HepG2 (cell line): ENCODE measurements at regions of chr14 and their contacts with region 1.

Region 1: DNA sequence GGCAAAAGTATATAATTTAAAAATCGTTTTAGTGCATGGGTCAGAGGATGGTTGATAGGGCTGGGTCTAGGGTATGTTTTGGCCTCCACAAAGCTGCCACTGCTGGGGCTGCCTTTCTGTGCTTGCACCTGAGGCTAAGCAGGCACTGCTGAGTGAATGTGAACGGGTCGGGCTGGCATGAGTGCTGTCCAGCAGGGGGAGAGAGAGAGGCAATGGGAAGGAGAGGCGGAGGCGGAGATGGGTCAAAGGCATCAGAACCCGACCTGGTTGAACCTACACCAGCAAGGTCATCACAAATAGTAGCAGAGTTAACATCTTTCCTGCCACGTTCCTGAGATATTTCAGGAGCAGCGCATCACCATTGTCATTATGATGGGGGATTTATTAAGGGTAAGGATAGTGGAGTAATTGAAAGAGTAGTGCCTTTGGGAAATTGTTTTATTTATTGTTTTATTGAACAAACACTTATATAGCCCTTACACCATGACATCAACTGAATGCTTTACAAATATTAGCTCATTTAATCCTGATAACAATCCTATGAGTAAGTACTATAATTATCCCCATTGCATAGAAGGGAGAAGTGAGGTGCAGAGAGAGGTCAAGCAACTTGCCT is 5.8 kb upstream of the NRXN3 start:
- DNase-seq: peak; percentile 15
- ATAC-seq: peak; percentile 98
- H3K4me3 ChIP-seq: no peak overlapping the region
- H3K27ac ChIP-seq: no peak overlapping the region
- H3K4me1 ChIP-seq: no peaks in the 10 kb centered on the region
- H3K27me3 ChIP-seq: 0 out of 5 replicates have a peak, but pooled peaks cover 0 to 3% of the 10 kb centered on the region in 2 experiments
- CTCF ChIP-seq: peak; percentile 77
- EP300 ChIP-seq: no peak
- POLR2A ChIP-seq: no peak
- RAD21 ChIP-seq: no peak

Region 2: DNA sequence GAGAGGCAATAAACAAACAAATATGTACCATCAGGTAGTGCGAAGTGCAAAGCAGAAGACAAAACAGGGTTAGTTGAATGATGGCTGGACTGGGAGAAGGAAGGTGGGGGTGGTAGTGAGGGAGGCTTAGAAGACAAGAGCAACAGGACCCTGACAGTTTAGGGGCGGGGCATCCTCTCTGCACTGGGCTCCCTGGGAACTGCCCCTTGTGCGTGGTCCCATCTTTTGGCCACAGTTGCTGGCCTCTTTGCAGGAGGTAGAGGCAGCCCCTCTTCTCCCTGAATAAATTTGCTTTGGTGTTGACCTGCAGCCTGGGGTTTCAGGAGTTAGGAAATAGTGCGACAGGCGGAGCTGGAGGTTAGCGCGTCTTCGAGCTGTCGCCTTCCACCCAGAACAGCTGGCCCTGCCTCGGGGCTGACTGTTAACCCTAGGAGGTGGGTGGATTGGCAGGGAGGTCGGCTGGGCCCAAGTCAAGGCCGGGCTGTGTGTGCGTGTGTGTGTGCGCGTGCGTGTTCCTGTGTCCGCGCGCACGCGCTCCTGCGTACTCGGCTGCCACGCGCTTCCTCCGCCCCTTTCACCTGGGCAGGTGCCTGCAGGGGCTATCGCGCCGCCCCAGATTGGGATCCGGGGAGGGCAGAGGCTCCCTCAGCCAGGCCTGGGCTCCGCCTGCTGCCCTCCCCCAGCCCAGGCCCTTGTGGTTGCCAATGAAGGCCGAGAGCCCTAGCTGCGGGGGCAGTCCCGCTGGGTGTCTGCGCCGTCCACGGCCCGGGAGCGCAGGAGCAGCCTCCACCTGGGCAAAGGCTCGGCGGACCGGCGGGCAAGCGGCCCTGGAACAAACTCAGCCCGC is 183.6 kb before region 1 on chr14:
- CTCF ChIA-PET with region 1: no interaction called
- POLR2A ChIA-PET with region 1: no interaction called
- in situ Hi-C with region 1: no loop called
- intact Hi-C with region 1: no loop called
- DNase-seq: no peak
- ATAC-seq: peak; percentile 74
- H3K4me3 ChIP-seq: peak overlapping the region in 2 of 3 experiments; percentile 39 to 52; a peak in 3 of 6 replicates
- H3K27ac ChIP-seq: no peak overlapping the region
- H3K4me1 ChIP-seq: 0 out of 2 replicates have a peak, but pooled peaks cover 8% of the 10 kb centered on the region
- H3K27me3 ChIP-seq: peaks cover 2 to 13% of the 10 kb centered on the region in 2 experiments; a peak in 1 of 5 replicates
- CTCF ChIP-seq: no peak
- EP300 ChIP-seq: no peak
- POLR2A ChIP-seq: no peak
- RAD21 ChIP-seq: no peak

Region 3: DNA sequence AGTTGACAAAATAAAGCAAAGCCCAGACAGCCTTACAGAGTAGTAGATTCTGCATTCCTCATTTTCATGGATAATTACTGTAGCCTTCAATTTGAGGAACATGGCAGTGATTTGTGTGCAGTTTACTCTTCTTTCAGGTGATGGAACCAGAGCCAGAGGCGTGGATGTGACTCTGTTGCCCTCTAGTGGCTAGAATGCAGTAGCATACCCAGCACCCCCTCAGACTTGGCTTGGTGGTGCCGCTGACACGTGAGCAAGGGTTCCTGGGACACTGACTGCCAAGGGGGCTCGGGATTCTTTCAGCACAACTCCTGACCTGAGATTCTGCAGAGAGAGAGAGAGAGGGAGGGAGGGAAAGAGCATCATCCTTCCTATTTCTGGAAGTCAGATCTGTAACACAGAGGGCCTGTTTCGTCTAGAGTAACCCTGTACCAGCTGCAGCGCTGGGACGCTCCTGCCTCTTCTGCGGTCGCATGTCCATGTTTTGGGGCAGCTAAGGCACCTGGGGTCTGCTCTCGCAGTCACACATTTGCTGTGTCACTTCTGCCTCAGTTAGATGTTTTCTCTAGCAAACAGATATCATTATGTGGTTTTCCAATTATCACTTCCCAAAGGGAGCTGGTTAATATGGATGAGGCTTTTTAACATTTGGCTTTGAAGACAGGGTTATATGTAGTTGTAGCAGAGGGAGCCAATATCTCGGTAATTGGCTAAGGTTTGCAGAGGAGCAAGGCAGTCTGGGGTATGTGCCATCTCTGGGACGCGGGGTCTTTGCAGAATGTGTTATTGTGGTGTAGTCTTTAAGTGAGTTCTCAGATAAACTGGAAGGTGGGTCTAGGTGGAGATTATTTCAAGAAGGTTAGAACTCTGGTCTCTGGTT is 433.9 kb after region 1 on chr14:
- CTCF ChIA-PET with region 1: no interaction called
- POLR2A ChIA-PET with region 1: no interaction called
- in situ Hi-C with region 1: no loop called
- intact Hi-C with region 1: loop called (anchors 1 kb)
- DNase-seq: peak; percentile 44
- ATAC-seq: peak; percentile 99
- H3K4me3 ChIP-seq: no peak overlapping the region
- H3K27ac ChIP-seq: no peak overlapping the region
- H3K4me1 ChIP-seq: no peaks in the 10 kb centered on the region
- H3K27me3 ChIP-seq: no peaks in the 10 kb centered on the region
- CTCF ChIP-seq: peak; percentile 87
- EP300 ChIP-seq: no peak
- POLR2A ChIP-seq: no peak
- RAD21 ChIP-seq: 0 out of 2 replicates have a peak, but pooled peaks have one; percentile 24

Region 4: DNA sequence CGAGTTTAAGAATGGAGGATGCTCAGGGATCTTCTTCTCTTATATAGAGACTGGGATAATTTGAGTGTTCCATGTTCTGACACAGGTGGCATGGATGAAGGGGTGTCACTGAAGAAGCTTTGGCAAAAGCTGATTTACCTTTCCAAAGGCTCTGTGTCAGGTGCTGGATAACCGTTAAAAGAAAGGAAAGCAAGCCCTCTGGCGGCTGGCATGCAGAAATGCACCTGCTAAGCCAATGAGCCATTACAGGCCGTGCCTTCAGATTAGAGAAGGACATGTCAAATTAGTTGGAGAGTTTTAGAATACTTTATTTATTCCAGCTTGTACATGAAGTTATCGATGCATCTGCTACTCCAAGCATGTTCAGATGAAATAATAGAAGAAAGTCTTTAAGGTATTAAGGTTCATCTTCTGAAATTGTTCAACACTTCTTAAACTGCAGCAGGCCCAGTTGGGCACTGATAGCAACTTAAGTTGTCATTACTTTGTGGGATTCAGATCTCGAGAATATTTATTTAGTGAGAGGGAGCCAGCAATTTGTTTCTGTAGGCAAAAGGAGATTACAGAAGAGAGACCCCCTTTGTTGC is 684.0 kb after region 1 on chr14:
- CTCF ChIA-PET with region 1: no interaction called
- POLR2A ChIA-PET with region 1: no interaction called
- in situ Hi-C with region 1: loop called (anchors 25 kb)
- intact Hi-C with region 1: no loop called
- DNase-seq: peak; percentile 29
- ATAC-seq: peak; percentile 91
- H3K4me3 ChIP-seq: no peak overlapping the region
- H3K27ac ChIP-seq: no peak overlapping the region
- H3K4me1 ChIP-seq: no peaks in the 10 kb centered on the region
- H3K27me3 ChIP-seq: no peaks in the 10 kb centered on the region
- CTCF ChIP-seq: peak; percentile 79
- EP300 ChIP-seq: no peak
- POLR2A ChIP-seq: no peak
- RAD21 ChIP-seq: no peak